ENCODE measurements at regions of chr17 and their contacts with region 1.

Region 1: DNA sequence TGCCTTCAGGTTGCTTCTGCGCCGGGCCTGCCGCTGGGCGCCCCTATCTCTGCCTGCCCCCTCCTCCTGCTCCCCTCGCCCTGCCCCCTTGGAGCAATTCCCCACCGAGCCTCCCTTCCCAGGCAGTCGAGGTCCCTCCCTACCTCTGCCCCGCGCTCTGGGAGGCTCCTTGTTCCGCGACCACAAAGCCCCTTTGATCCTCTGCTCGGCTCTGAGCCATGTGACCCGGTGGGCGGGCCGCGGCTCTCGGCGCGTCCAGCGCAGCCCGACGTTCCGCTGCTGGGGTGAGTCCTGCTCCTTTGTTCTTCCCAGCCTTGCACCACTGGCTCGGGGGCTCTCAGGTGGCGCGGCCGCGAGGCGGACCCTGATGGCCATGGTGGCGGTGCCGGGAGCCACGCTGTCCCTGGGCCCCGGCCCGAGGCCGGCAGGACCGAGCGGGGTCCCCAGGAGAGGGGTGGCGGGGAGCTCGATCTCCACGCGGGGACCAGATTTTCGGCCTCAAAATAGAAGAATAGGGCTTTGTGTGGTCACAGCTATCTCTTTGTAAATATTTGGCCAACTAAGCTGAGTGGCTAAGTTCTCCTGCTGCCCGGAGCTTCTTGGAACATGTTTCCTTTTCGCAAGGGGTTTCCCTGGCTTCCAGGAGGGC is 310.6 kb downstream of the SEC14L1 start:
- DNase-seq: peak; percentile 53 to 85 (median 72)
- ATAC-seq: peak; percentile 47
- H3K4me3 ChIP-seq: peak overlapping the region; percentile 94
- H3K4me3 Mint-ChIP-seq: peak overlapping the region; percentile 98
- H3K27ac ChIP-seq: peak overlapping the region; percentile 67 to 90
- H3K27ac Mint-ChIP-seq: peak overlapping the region; percentile 93
- H3K4me1 ChIP-seq: peaks cover 84% of the 10 kb centered on the region
- H3K4me1 Mint-ChIP-seq: peaks cover 65% of the 10 kb centered on the region
- H3K27me3 ChIP-seq: no peaks in the 10 kb centered on the region
- H3K27me3 Mint-ChIP-seq: no peaks in the 10 kb centered on the region
- CTCF ChIP-seq: no peak

Region 2: GRCh38 chr17:77312786-77313599 is 138.4 kb before region 1 on chr17:
- CTCF ChIA-PET with region 1: no interaction called
- POLR2A ChIA-PET with region 1: no interaction called
- intact Hi-C with region 1: no loop called
- DNase-seq: peak in 1 of 14 experiments; percentile 2
- ATAC-seq: no peak
- H3K4me3 ChIP-seq: no peak overlapping the region
- H3K4me3 Mint-ChIP-seq: no peak overlapping the region
- H3K27ac ChIP-seq: no peak overlapping the region
- H3K27ac Mint-ChIP-seq: no peak overlapping the region
- H3K4me1 ChIP-seq: no peaks in the 10 kb centered on the region
- H3K4me1 Mint-ChIP-seq: no peaks in the 10 kb centered on the region
- H3K27me3 ChIP-seq: no peaks in the 10 kb centered on the region
- H3K27me3 Mint-ChIP-seq: no peaks in the 10 kb centered on the region
- CTCF ChIP-seq: no peak

Region 3: DNA sequence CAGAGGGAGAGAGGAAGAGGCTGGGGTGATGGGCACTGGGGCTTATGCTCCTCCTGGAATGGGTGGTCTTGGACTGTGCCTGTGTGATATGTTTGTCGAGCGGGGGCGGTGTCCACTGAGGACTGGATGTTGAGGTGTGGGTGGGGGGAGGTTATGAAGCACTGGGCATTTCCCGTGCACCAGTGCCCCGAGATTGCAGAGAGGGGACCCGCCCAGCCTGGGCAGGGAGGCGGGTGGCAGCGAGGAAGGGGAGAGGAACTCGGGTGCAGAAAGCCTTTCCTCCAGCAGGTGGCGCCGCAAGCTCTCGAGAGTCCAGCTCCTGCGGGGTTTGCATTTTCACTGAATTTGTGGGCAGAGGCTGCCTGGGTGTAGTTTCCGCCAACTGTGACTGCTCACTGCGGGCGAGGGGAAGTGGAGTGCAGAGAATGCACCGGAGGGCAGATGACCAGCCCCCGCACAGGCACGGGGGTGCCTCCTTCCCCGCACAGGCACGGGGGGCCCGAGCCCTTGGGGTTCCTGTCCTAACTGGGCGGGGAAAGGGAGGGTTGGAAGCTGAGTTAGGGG is 120.0 kb before region 1 on chr17:
- CTCF ChIA-PET with region 1: interaction called, 7 read pairs
- POLR2A ChIA-PET with region 1: interaction called, 31 read pairs
- intact Hi-C with region 1: no loop called
- DNase-seq: peak; percentile 92 to 99 (median 98)
- ATAC-seq: peak; percentile 84
- H3K4me3 ChIP-seq: peak overlapping the region; percentile 51
- H3K4me3 Mint-ChIP-seq: peak overlapping the region; percentile 90
- H3K27ac ChIP-seq: peak overlapping the region; percentile 47 to 55
- H3K27ac Mint-ChIP-seq: peak overlapping the region; percentile 88
- H3K4me1 ChIP-seq: peaks cover 52% of the 10 kb centered on the region
- H3K4me1 Mint-ChIP-seq: peaks cover 59% of the 10 kb centered on the region
- H3K27me3 ChIP-seq: no peaks in the 10 kb centered on the region
- H3K27me3 Mint-ChIP-seq: no peaks in the 10 kb centered on the region
- CTCF ChIP-seq: peak; percentile 92

Region 4: DNA sequence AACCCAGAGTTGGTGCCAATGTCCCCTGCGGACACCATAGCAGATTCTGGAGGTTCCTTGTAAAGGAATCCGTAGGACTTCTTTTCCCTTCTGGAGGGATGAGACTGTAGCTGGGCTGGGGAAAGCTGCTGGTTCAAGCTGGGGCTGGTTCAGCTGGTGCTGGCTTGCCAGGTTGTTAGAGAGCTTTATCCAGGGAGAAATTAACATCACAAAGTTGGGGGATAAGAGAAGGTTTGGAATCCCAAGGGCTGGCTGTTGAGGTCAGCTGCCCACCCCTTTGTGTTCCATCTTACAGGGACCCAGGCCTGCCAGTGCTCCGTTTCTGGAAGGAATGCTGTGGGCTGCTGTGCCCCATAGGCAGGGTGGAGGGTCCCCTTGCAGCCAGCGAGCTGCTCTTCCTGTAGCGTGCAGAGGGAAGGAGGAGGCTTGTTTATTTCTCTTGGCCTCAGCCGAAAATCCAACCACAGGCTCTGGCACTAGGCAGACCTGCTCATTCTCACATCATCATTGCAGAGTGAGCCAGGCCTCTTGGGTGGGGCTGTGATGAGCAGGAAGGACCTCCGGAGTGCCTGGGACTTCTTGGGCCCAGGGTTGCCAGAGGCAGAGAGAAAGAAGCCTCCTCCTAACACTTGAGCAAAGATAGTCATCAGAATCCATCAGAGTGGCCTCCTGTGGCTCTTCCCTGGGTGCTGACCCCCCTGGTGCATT is 59.5 kb before region 1 on chr17:
- CTCF ChIA-PET with region 1: no interaction called
- POLR2A ChIA-PET with region 1: interaction called, 36 read pairs
- intact Hi-C with region 1: no loop called
- DNase-seq: peak in 10 of 14 experiments; percentile 33 to 76 (median 53)
- ATAC-seq: peak; percentile 41
- H3K4me3 ChIP-seq: peak overlapping the region; percentile 19
- H3K4me3 Mint-ChIP-seq: peak overlapping the region; percentile 65
- H3K27ac ChIP-seq: peak overlapping the region; percentile 31
- H3K27ac Mint-ChIP-seq: peak overlapping the region; percentile 90
- H3K4me1 ChIP-seq: peaks cover 91% of the 10 kb centered on the region
- H3K4me1 Mint-ChIP-seq: peaks cover 88% of the 10 kb centered on the region
- H3K27me3 ChIP-seq: no peaks in the 10 kb centered on the region
- H3K27me3 Mint-ChIP-seq: no peaks in the 10 kb centered on the region
- CTCF ChIP-seq: no peak

Region 5: GRCh38 chr17:77429919-77430752 is 21.2 kb before region 1 on chr17:
- CTCF ChIA-PET with region 1: interaction called, 7 read pairs
- POLR2A ChIA-PET with region 1: interaction called, 681 read pairs
- intact Hi-C with region 1: loop called in 1 of 2 experiments (anchors 1 kb)
- DNase-seq: peak; percentile 75 to 90 (median 84)
- ATAC-seq: peak; percentile 46
- H3K4me3 ChIP-seq: no peak overlapping the region
- H3K4me3 Mint-ChIP-seq: peak overlapping the region; percentile 62
- H3K27ac ChIP-seq: peak overlapping the region in 1 of 2 donors; percentile 29
- H3K27ac Mint-ChIP-seq: peak overlapping the region; percentile 93
- H3K4me1 ChIP-seq: peaks cover 100% of the 10 kb centered on the region
- H3K4me1 Mint-ChIP-seq: peaks cover 93% of the 10 kb centered on the region
- H3K27me3 ChIP-seq: no peaks in the 10 kb centered on the region
- H3K27me3 Mint-ChIP-seq: no peaks in the 10 kb centered on the region
- CTCF ChIP-seq: peak; percentile 77

Region 6: GRCh38 chr17:77471984-77472461 is 20.7 kb after region 1 on chr17:
- CTCF ChIA-PET with region 1: interaction called, 3 read pairs
- POLR2A ChIA-PET with region 1: interaction called, 681 read pairs
- intact Hi-C with region 1: loop called in 1 of 2 experiments (anchors 2 kb)
- DNase-seq: no peak
- ATAC-seq: no peak
- H3K4me3 ChIP-seq: peak overlapping the region; percentile 25
- H3K4me3 Mint-ChIP-seq: peak overlapping the region; percentile 79
- H3K27ac ChIP-seq: peak overlapping the region; percentile 40 to 62
- H3K27ac Mint-ChIP-seq: peak overlapping the region; percentile 97
- H3K4me1 ChIP-seq: peaks cover 99% of the 10 kb centered on the region
- H3K4me1 Mint-ChIP-seq: peaks cover 96% of the 10 kb centered on the region
- H3K27me3 ChIP-seq: no peaks in the 10 kb centered on the region
- H3K27me3 Mint-ChIP-seq: no peaks in the 10 kb centered on the region
- CTCF ChIP-seq: no peak

Region 7: GRCh38 chr17:78133971-78134898 is 682.9 kb after region 1 on chr17:
- CTCF ChIA-PET with region 1: no interaction called
- POLR2A ChIA-PET with region 1: interaction called, 9 read pairs
- intact Hi-C with region 1: loop called (anchors 5 to 10 kb)
- DNase-seq: peak; percentile 71 to 93 (median 78)
- ATAC-seq: peak; percentile 34
- H3K4me3 ChIP-seq: peak overlapping the region; percentile 94
- H3K4me3 Mint-ChIP-seq: peak overlapping the region; percentile 88
- H3K27ac ChIP-seq: peak overlapping the region; percentile 7 to 92
- H3K27ac Mint-ChIP-seq: peak overlapping the region; percentile 81
- H3K4me1 ChIP-seq: peaks cover 90% of the 10 kb centered on the region
- H3K4me1 Mint-ChIP-seq: peaks cover 80% of the 10 kb centered on the region
- H3K27me3 ChIP-seq: no peaks in the 10 kb centered on the region
- H3K27me3 Mint-ChIP-seq: no peaks in the 10 kb centered on the region
- CTCF ChIP-seq: peak; percentile 75